Adrenal gland (tissue), 19 donors: ENCODE measurements at regions of chr1 and their contacts with region 1.

Region 1: DNA sequence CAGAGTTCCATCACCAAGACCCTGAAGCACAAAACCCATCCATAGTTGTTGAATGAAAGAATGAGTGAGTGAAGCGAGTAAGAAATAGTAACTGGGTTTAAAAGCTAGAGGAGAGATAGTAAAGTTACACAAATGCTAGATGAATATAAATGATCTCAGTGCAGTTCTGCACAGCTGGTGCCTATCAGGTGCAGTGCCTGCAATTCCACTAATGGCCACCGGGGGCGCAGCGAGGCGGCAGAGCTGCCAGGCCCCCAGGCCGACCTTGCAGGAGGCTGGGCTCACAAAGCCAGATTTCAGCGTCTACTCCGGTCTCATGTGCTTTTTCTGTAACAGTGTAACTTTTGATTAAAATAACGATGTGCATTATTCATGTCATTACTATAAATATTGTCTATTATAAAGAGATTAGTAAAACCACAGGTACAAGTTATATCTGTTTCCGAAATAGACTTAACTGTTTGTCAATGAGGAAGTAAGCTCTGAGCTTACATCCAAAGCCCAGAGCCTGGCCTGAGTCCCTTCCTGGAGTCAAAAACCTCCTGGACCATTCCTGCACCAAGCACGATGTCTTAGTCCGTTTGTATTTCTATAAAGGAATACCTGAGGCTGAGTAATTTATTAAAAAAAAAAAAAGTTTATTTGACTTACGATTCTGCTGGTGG is 477.6 kb downstream of the NPHP4 start:
- DNase-seq: peak; percentile 43 to 88 (median 73)
- H3K4me3 ChIP-seq: no peak overlapping the region
- H3K27ac ChIP-seq: no peak overlapping the region
- H3K4me1 ChIP-seq: no peaks in the 10 kb centered on the region
- H3K27me3 ChIP-seq: peaks cover 4% of the 10 kb centered on the region
- CTCF ChIP-seq: peak; percentile 87 to 100 (median 94)
- POLR2A ChIP-seq: no peak

Region 2: GRCh38 chr1:5915587-5916571 is 401.2 kb after region 1 on chr1:
- intact Hi-C with region 1: loop called in 1 of 2 experiments (anchors 5 kb)
- DNase-seq: peak in 5 of 7 donors; percentile 29 to 61 (median 43)
- H3K4me3 ChIP-seq: no peak overlapping the region
- H3K27ac ChIP-seq: no peak overlapping the region
- H3K4me1 ChIP-seq: peaks cover 0 to 4% of the 10 kb centered on the region in 2 donors
- H3K27me3 ChIP-seq: no peaks in the 10 kb centered on the region
- CTCF ChIP-seq: peak; percentile 47 to 72 (median 62)
- POLR2A ChIP-seq: no peak

Region 3: DNA sequence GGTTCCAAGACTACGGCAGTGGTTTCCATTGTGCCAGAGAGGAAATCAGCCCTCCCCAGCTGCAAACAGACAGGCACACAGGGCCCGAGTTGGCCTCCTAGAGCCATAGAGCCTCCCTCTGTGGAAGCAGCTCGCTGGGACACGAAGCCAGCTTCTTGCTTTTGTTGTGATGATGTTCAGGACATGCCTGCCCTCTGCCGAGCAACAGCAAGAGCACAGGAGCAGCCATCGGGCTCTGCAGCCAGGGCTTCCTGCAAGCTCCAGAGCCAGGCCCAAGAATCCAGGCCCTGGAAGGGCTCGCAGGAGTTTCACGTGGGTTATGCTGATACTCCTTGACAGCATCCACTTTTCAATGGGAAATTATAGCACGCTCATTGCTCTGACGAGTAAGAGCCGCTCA is 459.1 kb after region 1 on chr1:
- intact Hi-C with region 1: loop called in 1 of 2 experiments (anchors 5 kb)
- DNase-seq: no peak
- H3K4me3 ChIP-seq: no peak overlapping the region
- H3K27ac ChIP-seq: no peak overlapping the region
- H3K4me1 ChIP-seq: no peaks in the 10 kb centered on the region
- H3K27me3 ChIP-seq: no peaks in the 10 kb centered on the region
- CTCF ChIP-seq: no peak
- POLR2A ChIP-seq: no peak